CD8-positive, alpha-beta T cell (primary cell): ENCODE measurements at regions of chr17 and their contacts with region 1.

Region 1: GRCh38 chr17:28644985-28645939 is at the start of gene BLTP2:
- DNase-seq: peak; percentile 91 to 98 (median 96)
- ATAC-seq: peak; percentile 98
- H3K4me3 ChIP-seq: peak within 1 kb of the TSS; percentile 81 to 82
- H3K4me3 Mint-ChIP-seq: peak within 1 kb of the TSS; percentile 90
- H3K27ac ChIP-seq: peak within 1 kb of the TSS; percentile 75 to 89
- H3K27ac Mint-ChIP-seq: peak within 1 kb of the TSS; percentile 95
- H3K4me1 ChIP-seq: peaks cover 34% of the 10 kb centered on the region
- H3K4me1 Mint-ChIP-seq: peaks cover 46% of the 10 kb centered on the region
- H3K27me3 ChIP-seq: no peaks in the 10 kb centered on the region
- H3K27me3 Mint-ChIP-seq: no peaks in the 10 kb centered on the region
- CTCF ChIP-seq: no peak
- total RNA-seq, gene BLTP2: 136 to 148 TPM

Region 2: DNA sequence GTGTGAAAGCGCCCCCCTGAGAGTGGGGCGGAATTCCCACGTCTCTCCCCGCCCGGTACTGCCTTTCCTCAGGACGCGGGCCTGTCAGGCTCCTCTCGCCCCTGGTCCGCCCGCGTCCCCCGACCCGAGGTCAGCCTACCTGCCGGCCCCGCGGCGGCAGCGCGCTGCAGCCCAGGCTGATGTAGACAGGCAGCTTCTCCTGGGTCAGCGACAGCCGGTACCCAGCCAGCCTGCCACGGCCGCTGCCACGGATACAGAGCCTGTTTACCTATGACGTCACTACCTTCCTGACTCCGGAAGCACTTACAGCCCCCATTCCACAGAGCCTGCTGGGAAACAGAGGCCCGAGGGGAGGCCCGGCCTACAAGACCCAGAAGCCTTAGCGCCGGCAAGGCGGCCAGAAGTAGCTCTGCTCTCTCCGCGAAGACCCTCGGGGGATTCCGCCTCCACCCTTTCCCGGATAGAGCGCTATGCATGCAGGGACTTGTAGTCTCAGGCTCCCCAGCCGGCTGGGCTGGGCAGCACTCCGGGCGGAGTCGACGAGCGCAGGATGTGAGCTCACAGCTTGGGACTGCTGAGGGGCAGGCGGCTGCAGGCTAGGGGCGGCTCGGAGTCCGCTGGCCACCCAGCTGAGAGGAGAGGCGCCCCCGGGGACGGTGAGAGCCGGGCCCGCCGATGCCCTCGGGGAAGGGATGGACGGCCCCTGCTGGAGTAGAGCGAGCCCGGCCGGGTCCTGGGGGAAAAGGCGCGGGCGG is 309.9 kb before region 1 on chr17 and contains the starts of genes IFT20 and TNFAIP1:
- CTCF ChIA-PET with region 1: no interaction called
- POLR2A ChIA-PET with region 1: no interaction called
- intact Hi-C with region 1: loop called in 1 of 2 experiments (anchors 10 kb)
- DNase-seq: peak; percentile 94 to 100 (median 97)
- ATAC-seq: peak; percentile 96
- H3K4me3 ChIP-seq: peak within 1 kb of the TSS; percentile 80 to 95
- H3K4me3 Mint-ChIP-seq: peak within 1 kb of the TSS; percentile 99
- H3K27ac ChIP-seq: peak within 1 kb of the TSS; percentile 92 to 97
- H3K27ac Mint-ChIP-seq: peak within 1 kb of the TSS; percentile 97
- H3K4me1 ChIP-seq: peaks cover 22% of the 10 kb centered on the region
- H3K4me1 Mint-ChIP-seq: peaks cover 41% of the 10 kb centered on the region
- H3K27me3 ChIP-seq: no peaks in the 10 kb centered on the region
- H3K27me3 Mint-ChIP-seq: no peaks in the 10 kb centered on the region
- CTCF ChIP-seq: no peak
- total RNA-seq, gene IFT20: 32.5 to 34.6 TPM
- total RNA-seq, gene TNFAIP1: 15.3 to 15.5 TPM

Region 3: DNA sequence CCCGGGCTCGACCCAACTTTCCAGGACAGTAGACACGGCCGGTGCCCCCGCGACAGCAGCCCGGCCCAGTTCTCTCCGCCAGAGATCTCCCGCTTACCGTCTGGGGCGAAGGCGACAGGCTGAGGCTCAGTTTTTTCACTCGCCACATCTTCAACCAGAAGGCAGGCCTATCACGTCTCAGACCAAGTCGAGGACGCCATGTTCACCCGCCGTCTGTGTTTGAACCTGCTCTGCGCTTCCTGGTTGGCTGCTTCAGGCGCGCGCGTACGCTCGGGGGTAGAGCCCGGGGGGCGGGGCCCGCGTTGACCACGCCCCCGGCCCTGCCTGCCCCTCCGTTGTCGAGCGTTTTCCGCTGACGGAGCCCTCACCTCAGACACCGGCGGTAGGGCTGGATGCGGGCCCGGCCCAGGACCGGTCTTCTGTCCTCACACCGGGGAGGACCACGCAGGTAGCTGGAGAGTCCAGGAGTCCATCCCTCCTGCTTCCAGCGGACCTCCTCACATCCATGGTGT is 46.4 kb before region 1 on chr17 and contains the start of gene SPAG5:
- CTCF ChIA-PET with region 1: interaction called, 3 read pairs
- POLR2A ChIA-PET with region 1: interaction called, 5 read pairs
- intact Hi-C with region 1: loop called (anchors 1 kb)
- DNase-seq: peak; percentile 90 to 97 (median 94)
- ATAC-seq: peak; percentile 91
- H3K4me3 ChIP-seq: peak within 1 kb of the TSS; percentile 86 to 89
- H3K4me3 Mint-ChIP-seq: peak within 1 kb of the TSS; percentile 89
- H3K27ac ChIP-seq: peak within 1 kb of the TSS; percentile 96 to 99
- H3K27ac Mint-ChIP-seq: peak within 1 kb of the TSS; percentile 99
- H3K4me1 ChIP-seq: peaks cover 13% of the 10 kb centered on the region
- H3K4me1 Mint-ChIP-seq: peaks cover 19% of the 10 kb centered on the region
- H3K27me3 ChIP-seq: no peaks in the 10 kb centered on the region
- H3K27me3 Mint-ChIP-seq: no peaks in the 10 kb centered on the region
- CTCF ChIP-seq: no peak
- total RNA-seq, gene SPAG5: 23.1 to 26.6 TPM

Region 4: GRCh38 chr17:28710861-28711722 is 65.8 kb after region 1 on chr17:
- CTCF ChIA-PET with region 1: no interaction called
- POLR2A ChIA-PET with region 1: interaction called, 3 read pairs
- intact Hi-C with region 1: loop called (anchors 1 to 5 kb)
- DNase-seq: peak; percentile 77 to 90 (median 89)
- ATAC-seq: peak; percentile 92
- H3K4me3 ChIP-seq: peak overlapping the region; percentile 66 to 89
- H3K4me3 Mint-ChIP-seq: peak overlapping the region; percentile 89
- H3K27ac ChIP-seq: peak overlapping the region; percentile 69 to 76
- H3K27ac Mint-ChIP-seq: peak overlapping the region; percentile 91
- H3K4me1 ChIP-seq: peaks cover 16% of the 10 kb centered on the region
- H3K4me1 Mint-ChIP-seq: peaks cover 17% of the 10 kb centered on the region
- H3K27me3 ChIP-seq: no peaks in the 10 kb centered on the region
- H3K27me3 Mint-ChIP-seq: peaks cover 14% of the 10 kb centered on the region
- CTCF ChIP-seq: no peak

Region 5: DNA sequence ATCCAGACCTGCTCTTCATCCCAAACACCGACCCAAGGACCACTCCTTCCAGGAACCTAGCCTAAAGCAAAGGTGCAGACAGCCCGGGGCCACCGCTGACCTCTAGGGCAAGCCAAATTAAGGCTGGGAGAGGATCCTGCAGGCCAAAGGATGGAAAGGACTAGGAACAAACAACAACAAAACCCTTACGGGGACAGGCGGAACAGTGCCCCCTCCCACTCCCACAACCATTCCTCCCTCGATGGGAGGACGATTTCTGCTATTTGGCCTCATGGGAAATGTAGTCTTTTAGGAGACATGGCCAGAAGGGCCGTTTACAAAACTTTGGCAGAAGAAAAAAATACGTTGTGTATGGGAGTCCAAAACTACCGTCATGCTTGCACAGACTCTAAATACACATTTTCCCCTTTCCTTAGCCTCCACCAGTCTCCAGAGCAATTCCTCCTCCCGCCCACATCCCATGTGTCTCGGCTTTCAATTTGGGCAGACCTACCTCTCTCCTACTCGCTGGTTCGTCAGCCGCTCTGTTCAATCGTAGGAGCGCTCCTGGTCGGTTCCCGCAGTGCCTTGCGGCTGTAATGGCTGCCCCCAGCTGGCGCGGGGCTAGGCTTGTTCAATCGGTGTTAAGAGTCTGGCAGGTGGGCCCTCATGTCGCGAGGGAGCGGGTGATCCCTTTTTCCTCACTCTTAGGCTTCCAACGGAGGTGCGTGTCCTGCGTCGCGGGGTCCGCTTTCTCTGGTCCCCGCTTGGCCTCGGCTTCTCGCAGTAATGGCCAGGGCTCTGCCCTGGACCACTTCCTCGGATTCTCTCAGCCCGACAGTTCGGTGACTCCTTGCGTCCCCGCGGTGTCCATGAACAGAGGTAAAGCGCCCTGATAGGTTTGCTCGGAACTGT is 209.4 kb after region 1 on chr17 and contains the start of gene ERAL1:
- CTCF ChIA-PET with region 1: no interaction called
- POLR2A ChIA-PET with region 1: no interaction called
- intact Hi-C with region 1: loop called in 1 of 2 experiments (anchors 5 kb)
- DNase-seq: peak; percentile 62 to 90 (median 84)
- ATAC-seq: peak; percentile 99
- H3K4me3 ChIP-seq: peak within 1 kb of the TSS; percentile 75 to 96
- H3K4me3 Mint-ChIP-seq: peak within 1 kb of the TSS; percentile 95
- H3K27ac ChIP-seq: peak within 1 kb of the TSS; percentile 61 to 74
- H3K27ac Mint-ChIP-seq: peak within 1 kb of the TSS; percentile 90
- H3K4me1 ChIP-seq: peaks cover 12% of the 10 kb centered on the region
- H3K4me1 Mint-ChIP-seq: peaks cover 18% of the 10 kb centered on the region
- H3K27me3 ChIP-seq: no peaks in the 10 kb centered on the region
- H3K27me3 Mint-ChIP-seq: no peaks in the 10 kb centered on the region
- CTCF ChIP-seq: no peak
- total RNA-seq, gene ERAL1: 20.0 to 21.2 TPM

Region 6: DNA sequence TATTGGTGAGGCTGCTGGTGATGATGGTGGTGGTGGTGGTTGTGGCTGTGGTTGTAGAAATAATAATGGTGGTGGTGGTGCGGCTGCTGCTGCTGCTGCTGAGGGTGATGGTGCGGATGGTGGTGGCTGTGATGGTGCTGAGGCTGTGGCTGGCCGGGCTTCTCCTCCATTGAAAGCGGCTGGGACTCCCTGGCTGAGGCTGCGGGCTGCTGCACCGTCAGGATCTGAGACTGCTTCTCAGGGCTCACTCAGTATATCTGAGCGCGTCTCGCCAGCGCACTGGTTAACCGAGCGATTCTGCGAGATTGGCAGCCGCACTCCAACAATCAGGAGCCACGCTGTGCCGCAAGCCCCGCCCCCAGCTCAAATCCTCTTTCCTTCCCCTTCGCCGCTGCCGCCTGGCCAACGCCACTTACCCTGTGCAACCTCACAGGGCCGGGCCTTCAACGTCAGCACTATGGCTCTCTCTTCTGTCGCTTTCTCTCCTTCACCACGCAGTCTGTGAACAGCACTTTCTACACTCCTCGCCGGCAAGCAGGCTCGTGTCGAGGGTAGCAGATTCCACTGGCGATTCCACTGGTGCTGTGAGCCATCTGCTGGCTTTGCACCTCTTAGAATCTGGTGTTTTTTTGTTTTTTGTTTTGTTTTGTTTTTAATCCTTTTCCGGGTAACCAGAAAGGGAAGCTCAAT is 648.8 kb after region 1 on chr17 and contains the start of gene NUFIP2:
- CTCF ChIA-PET with region 1: no interaction called
- POLR2A ChIA-PET with region 1: no interaction called
- intact Hi-C with region 1: loop called in 1 of 2 experiments (anchors 1 kb)
- DNase-seq: peak; percentile 94 to 100 (median 99)
- ATAC-seq: peak; percentile 86
- H3K4me3 ChIP-seq: peak within 1 kb of the TSS; percentile 93 to 94
- H3K4me3 Mint-ChIP-seq: peak within 1 kb of the TSS; percentile 99
- H3K27ac ChIP-seq: peak within 1 kb of the TSS; percentile 70 to 89
- H3K27ac Mint-ChIP-seq: peak within 1 kb of the TSS; percentile 98
- H3K4me1 ChIP-seq: peaks cover 40% of the 10 kb centered on the region
- H3K4me1 Mint-ChIP-seq: peaks cover 42% of the 10 kb centered on the region
- H3K27me3 ChIP-seq: no peaks in the 10 kb centered on the region
- H3K27me3 Mint-ChIP-seq: no peaks in the 10 kb centered on the region
- CTCF ChIP-seq: no peak
- total RNA-seq, gene NUFIP2: 67.9 to 71.8 TPM